ENCODE measurements at regions of chr6 and their contacts with region 1.

Region 1: GRCh38 chr6:163438940-163439335 is 24.4 kb downstream of the QKI start:
- DNase-seq: peak; percentile 38 to 49
- ATAC-seq: peak; percentile 31 to 74 (median 58)
- H3K4me3 ChIP-seq: no peak overlapping the region
- H3K27ac ChIP-seq: peak overlapping the region in 1 of 10 donors; percentile 15
- H3K4me1 ChIP-seq: peaks cover 15 to 100% (median 98%) of the 10 kb centered on the region in 9 donors
- H3K27me3 ChIP-seq: no peaks in the 10 kb centered on the region
- CTCF ChIP-seq: no peak

Region 2: DNA sequence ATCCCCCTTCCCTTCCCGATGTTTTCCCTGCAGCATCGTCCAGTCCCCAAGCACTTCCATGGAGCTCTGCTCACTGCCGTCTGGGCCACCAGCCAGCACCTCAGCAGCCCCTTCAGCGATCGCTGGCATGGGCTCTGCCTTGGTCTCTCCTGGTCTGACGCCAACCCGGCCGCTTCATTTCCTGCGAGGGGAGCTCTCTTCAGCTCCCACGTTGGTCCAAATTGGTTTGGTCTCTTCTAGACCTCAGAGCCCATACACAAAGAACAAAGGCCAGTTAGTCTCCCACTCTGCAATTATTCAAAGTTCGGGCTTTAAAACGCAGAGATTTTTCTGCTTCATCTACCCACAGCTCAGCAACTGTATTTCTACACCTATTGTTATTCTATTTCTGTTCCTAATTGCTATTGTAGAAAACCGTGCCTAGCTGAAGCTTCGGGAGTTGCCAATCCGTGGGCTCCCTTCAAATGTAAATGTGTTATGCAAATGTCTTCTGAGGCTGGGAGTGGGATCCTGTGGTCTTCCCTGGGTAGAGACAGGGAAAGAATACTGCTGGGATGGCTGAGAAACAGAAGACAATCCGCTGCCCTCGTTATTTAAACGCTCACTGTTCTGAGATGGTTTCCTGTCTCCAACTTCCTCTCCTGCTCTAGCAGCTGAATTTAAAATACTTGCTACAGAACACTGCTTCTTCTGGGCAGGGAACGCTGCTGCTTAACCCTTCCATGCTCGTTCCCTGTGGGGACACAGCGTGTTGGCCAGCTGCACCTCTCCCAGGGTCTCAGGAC is 178.6 kb before region 1 on chr6:
- intact Hi-C with region 1: no loop called
- DNase-seq: peak in 1 of 2 donors; percentile 55
- ATAC-seq: peak; percentile 5 to 57 (median 46)
- H3K4me3 ChIP-seq: peak overlapping the region in 8 of 10 donors; percentile 8 to 44 (median 30)
- H3K27ac ChIP-seq: peak overlapping the region; percentile 15 to 77 (median 64)
- H3K4me1 ChIP-seq: peaks cover 4 to 44% (median 20%) of the 10 kb centered on the region in 9 donors
- H3K27me3 ChIP-seq: no peaks in the 10 kb centered on the region
- CTCF ChIP-seq: no peak

Region 3: DNA sequence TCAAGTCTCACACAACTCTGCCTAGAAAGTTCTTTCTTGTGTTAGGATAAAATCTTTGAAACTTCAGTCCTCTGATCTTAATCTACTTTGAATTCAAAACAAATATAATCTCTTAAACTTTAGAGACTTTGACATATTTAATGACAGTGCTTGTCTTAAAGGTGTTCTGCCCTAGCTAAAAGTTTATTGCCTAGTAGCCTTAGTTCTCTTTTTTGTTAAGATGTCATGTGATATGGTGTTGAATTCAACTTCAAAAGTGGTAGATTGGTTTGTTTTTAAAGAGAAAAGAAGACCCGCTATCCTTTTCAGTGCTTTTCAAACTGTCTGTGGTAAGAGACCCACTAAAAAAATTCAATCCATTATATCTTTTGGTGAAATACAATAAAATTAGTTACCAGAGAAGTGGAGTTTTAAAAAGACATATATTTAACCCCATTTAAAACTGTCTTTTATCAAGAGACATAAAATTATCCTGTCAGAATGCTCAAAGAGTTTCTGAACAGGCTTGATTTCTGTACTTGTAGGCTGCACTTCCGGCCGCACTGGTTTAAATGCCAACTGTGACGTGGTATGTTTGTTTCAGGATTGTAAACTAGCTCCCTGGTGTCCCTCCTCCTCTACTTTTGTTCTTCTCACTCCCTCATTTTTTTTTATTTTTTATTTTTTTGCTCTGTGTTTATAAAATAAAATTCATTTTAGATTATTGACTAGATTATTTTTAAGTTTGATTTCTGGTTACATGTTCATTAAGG is 52.1 kb after region 1 on chr6:
- intact Hi-C with region 1: loop called in 1 of 10 experiments (anchors 10 kb)
- DNase-seq: peak; percentile 40 to 86
- ATAC-seq: peak; percentile 69 to 86 (median 80)
- H3K4me3 ChIP-seq: no peak overlapping the region
- H3K27ac ChIP-seq: peak overlapping the region in 8 of 10 donors; percentile 2 to 75 (median 60)
- H3K4me1 ChIP-seq: peaks cover 0 to 100% (median 92%) of the 10 kb centered on the region in 9 donors
- H3K27me3 ChIP-seq: no peaks in the 10 kb centered on the region
- CTCF ChIP-seq: no peak

Region 4: GRCh38 chr6:163554663-163555062 is 115.7 kb after region 1 on chr6:
- intact Hi-C with region 1: loop called in 2 of 10 experiments (anchors 10 kb)
- DNase-seq: peak in 1 of 2 donors; percentile 44
- ATAC-seq: peak in 4 of 8 donors; percentile 29 to 53 (median 45)
- H3K4me3 ChIP-seq: no peak overlapping the region
- H3K27ac ChIP-seq: peak overlapping the region in 2 of 10 donors; percentile 37 to 49
- H3K4me1 ChIP-seq: peaks cover 0 to 69% (median 34%) of the 10 kb centered on the region in 9 donors
- H3K27me3 ChIP-seq: no peaks in the 10 kb centered on the region
- CTCF ChIP-seq: peak in 8 of 9 donors; percentile 29 to 64 (median 54)

Region 5: DNA sequence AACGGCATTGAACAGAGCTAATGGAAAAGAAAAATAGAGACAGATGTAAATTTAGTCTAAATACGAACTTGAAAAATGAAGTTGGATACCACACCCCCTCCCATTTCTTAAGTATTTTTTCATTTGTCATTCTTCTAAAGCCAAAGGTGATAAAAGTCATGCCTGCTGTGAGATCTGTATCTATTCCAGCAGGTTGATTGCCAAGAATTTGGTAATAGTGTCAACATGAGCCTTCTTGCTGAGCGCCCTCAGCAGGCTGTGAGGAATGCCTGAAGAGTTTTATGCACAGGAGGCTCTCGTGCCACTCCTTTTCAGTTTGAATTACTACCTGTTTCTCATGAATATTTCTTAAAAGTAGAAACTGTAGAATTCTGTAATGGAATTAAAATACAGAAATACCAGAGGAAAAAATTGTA is 140.9 kb after region 1 on chr6:
- intact Hi-C with region 1: loop called in 1 of 10 experiments (anchors 10 kb)
- DNase-seq: no peak
- ATAC-seq: peak in 5 of 8 donors; percentile 30 to 46 (median 35)
- H3K4me3 ChIP-seq: no peak overlapping the region
- H3K27ac ChIP-seq: peak overlapping the region in 7 of 10 donors; percentile 3 to 51 (median 25)
- H3K4me1 ChIP-seq: peaks cover 0 to 48% (median 17%) of the 10 kb centered on the region in 9 donors
- H3K27me3 ChIP-seq: no peaks in the 10 kb centered on the region
- CTCF ChIP-seq: peak in 3 of 9 donors; percentile 37 to 47 (median 41)

Region 6: GRCh38 chr6:163935158-163935762 is 496.3 kb after region 1 on chr6:
- intact Hi-C with region 1: loop called in 1 of 10 experiments (anchors 5 kb)
- DNase-seq: peak in 1 of 2 donors; percentile 29
- ATAC-seq: peak in 6 of 8 donors; percentile 52 to 66 (median 62)
- H3K4me3 ChIP-seq: no peak overlapping the region
- H3K27ac ChIP-seq: peak overlapping the region in 4 of 10 donors; percentile 7 to 36 (median 24)
- H3K4me1 ChIP-seq: peaks cover 0 to 29% (median 15%) of the 10 kb centered on the region in 9 donors
- H3K27me3 ChIP-seq: no peaks in the 10 kb centered on the region
- CTCF ChIP-seq: no peak